ENCODE measurements at regions of chr12 and their contacts with region 1.

Region 1: GRCh38 chr12:97404543-97404942 is 58.1 kb upstream of the RMST start:
- DNase-seq: peak in 6 of 10 donors; percentile 3 to 47 (median 41)
- H3K4me3 ChIP-seq: no peak overlapping the region
- H3K27ac ChIP-seq: no peak overlapping the region
- H3K27me3 ChIP-seq: peaks cover 0 to 2% (median 0%) of the 10 kb centered on the region in 45 donors
- CTCF ChIP-seq: peak; percentile 56 to 88 (median 76)

Region 2: DNA sequence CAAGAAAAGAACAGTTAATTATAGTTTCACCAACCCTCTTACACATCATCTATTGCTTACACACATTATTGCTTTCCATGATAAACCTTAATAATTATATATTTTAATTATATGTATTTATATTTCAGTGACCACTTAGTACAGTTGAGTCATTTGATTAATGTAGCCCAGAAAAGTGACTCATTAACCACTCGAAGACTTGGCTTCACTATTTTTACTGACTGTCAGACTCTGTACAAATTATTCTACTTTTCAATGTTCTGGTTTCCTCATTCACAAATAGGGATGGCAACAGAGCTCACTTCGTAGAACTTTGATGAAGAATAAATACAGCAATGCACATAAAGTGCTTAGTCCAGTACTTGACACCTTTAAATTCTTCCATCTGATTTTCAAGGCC is 816.9 kb before region 1 on chr12:
- intact Hi-C with region 1: loop called in 1 of 2 experiments (anchors 10 kb)
- DNase-seq: no peak
- H3K4me3 ChIP-seq: no peak overlapping the region
- H3K27ac ChIP-seq: no peak overlapping the region
- H3K27me3 ChIP-seq: no peaks in the 10 kb centered on the region
- CTCF ChIP-seq: no peak

Region 3: GRCh38 chr12:97148941-97149559 is 255.5 kb before region 1 on chr12:
- intact Hi-C with region 1: loop called (anchors 5 kb)
- DNase-seq: peak in 7 of 10 donors; percentile 43 to 69 (median 56)
- H3K4me3 ChIP-seq: no peak overlapping the region
- H3K27ac ChIP-seq: no peak overlapping the region
- H3K27me3 ChIP-seq: no peaks in the 10 kb centered on the region
- CTCF ChIP-seq: peak in 55 of 56 donors; percentile 19 to 88 (median 72)

Region 4: GRCh38 chr12:97321621-97322020 is 82.9 kb before region 1 on chr12:
- intact Hi-C with region 1: loop called in 1 of 2 experiments (anchors 5 kb)
- DNase-seq: no peak
- H3K4me3 ChIP-seq: no peak overlapping the region
- H3K27ac ChIP-seq: no peak overlapping the region
- H3K27me3 ChIP-seq: peaks cover 0 to 13% (median 0%) of the 10 kb centered on the region in 45 donors
- CTCF ChIP-seq: no peak

Measured in dorsolateral prefrontal cortex (tissue), 120 donors.